HepG2 (cell line): ENCODE measurements at regions of chr11 and their contacts with region 1.

Region 1: GRCh38 chr11:121655537-121656327 is 203.0 kb upstream of the SORL1-AS1 start:
- DNase-seq: peak; percentile 69
- ATAC-seq: peak; percentile 93
- H3K4me3 ChIP-seq: peak overlapping the region; percentile 42 to 65 (median 56)
- H3K27ac ChIP-seq: peak overlapping the region; percentile 71
- H3K4me1 ChIP-seq: peaks cover 48% of the 10 kb centered on the region
- H3K27me3 ChIP-seq: peaks cover 0 to 6% of the 10 kb centered on the region in 2 experiments; a peak in 2 of 5 replicates
- CTCF ChIP-seq: peak; percentile 90
- EP300 ChIP-seq: no peak
- POLR2A ChIP-seq: no peak
- RAD21 ChIP-seq: peak; percentile 94

Region 2: GRCh38 chr11:122020902-122021301 is 365.2 kb after region 1 on chr11:
- CTCF ChIA-PET with region 1: no interaction called
- POLR2A ChIA-PET with region 1: no interaction called
- in situ Hi-C with region 1: loop called (anchors 10 kb)
- intact Hi-C with region 1: no loop called
- DNase-seq: no peak
- ATAC-seq: no peak
- H3K4me3 ChIP-seq: no peak overlapping the region
- H3K27ac ChIP-seq: no peak overlapping the region
- H3K4me1 ChIP-seq: no peaks in the 10 kb centered on the region
- H3K27me3 ChIP-seq: no peaks in the 10 kb centered on the region
- CTCF ChIP-seq: 0 out of 2 replicates have a peak, but pooled peaks have one; percentile 7
- EP300 ChIP-seq: no peak
- POLR2A ChIP-seq: no peak
- RAD21 ChIP-seq: no peak

Region 3: DNA sequence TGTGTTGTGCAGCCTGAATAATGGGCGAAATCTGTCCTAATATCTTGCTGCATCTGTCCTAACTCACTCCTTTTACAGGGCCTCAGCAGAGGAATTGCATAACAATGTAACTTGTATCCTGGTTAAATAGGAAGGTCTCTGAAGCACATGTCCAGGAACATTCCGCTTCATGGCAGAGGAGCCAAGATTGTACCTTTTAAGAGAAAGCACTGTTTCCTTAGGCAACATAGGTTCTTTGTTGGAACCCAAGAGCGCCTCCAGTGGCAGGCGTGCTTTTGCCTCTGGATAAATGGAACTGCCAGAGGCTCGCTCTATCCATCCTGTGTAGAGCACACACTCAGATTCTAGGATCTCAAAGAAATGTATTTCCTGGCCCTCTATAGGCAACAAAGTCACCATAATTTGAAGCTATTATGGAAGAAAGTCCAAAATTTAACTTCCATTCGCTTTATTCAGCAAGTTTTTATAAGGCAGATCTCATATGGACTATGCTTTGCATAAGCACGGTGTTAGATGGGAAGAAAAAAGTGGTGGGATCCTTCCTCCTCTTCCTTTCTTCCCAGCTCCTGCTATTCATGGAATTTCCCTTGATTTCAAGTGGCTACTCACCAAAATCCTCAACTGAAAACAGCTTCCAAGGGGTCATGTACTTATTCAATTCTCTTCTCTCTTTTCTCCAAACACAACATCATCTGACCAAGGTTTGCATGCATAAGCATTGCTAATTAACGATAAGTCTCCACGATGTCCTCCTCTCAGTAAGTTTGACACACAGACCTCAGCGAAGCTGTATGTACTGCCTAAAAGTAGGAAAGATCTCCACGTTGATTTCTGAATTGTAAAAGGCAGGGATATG is 460.0 kb after region 1 on chr11 and contains the start of gene BLID:
- CTCF ChIA-PET with region 1: interaction called, 3 read pairs
- POLR2A ChIA-PET with region 1: no interaction called
- in situ Hi-C with region 1: loop called (anchors 10 kb)
- intact Hi-C with region 1: no loop called
- DNase-seq: peak; percentile 7
- ATAC-seq: peak; percentile 85
- H3K4me3 ChIP-seq: no peak within 1 kb of the TSS
- H3K27ac ChIP-seq: no peak within 1 kb of the TSS
- H3K4me1 ChIP-seq: no peaks in the 10 kb centered on the region
- H3K27me3 ChIP-seq: no peaks in the 10 kb centered on the region
- CTCF ChIP-seq: peak; percentile 60
- EP300 ChIP-seq: no peak
- POLR2A ChIP-seq: no peak
- RAD21 ChIP-seq: no peak
- total RNA-seq, gene BLID: not detected in 2 replicates

Region 4: DNA sequence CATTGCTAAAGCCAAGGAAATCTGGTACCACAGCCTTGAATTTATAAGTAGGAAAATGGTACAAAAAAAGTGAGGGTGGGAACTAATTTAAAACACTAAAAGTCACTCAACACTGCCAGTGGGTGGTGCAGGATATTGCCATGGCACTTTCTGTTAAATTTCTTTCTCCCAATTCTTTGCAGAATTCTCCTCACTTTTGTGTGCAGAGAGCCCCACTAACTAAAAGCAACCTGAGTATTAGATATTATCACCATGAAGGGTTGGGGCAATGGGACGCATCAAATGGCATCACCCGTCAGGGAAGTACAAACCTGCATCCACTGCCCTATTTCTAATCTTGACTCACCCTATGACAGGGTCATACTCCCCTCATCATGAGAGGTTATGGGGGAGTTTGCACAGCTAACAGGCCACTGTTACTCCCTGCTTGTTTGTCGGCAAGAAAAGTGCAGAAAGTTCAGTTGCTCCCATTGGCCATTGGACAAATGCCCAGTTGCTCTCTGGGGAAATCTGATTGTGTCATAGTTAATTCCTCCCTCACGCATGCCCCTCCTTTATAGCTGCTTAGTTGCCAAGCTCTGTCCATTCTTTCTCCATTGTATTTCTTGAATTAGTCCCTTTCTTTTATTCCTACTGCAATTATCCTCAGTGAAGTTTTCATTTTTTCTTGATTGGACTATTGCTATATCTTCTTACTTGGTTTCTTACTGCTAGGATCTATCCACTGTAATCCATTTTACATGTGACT is 554.1 kb after region 1 on chr11:
- CTCF ChIA-PET with region 1: no interaction called
- POLR2A ChIA-PET with region 1: no interaction called
- in situ Hi-C with region 1: loop called (anchors 5 kb)
- intact Hi-C with region 1: no loop called
- DNase-seq: no peak
- ATAC-seq: no peak
- H3K4me3 ChIP-seq: no peak overlapping the region
- H3K27ac ChIP-seq: no peak overlapping the region
- H3K4me1 ChIP-seq: peaks cover 21% of the 10 kb centered on the region
- H3K27me3 ChIP-seq: peaks cover 1 to 8% of the 10 kb centered on the region in 2 experiments; a peak in 1 of 5 replicates
- CTCF ChIP-seq: no peak
- EP300 ChIP-seq: no peak
- POLR2A ChIP-seq: no peak
- RAD21 ChIP-seq: no peak

Region 5: DNA sequence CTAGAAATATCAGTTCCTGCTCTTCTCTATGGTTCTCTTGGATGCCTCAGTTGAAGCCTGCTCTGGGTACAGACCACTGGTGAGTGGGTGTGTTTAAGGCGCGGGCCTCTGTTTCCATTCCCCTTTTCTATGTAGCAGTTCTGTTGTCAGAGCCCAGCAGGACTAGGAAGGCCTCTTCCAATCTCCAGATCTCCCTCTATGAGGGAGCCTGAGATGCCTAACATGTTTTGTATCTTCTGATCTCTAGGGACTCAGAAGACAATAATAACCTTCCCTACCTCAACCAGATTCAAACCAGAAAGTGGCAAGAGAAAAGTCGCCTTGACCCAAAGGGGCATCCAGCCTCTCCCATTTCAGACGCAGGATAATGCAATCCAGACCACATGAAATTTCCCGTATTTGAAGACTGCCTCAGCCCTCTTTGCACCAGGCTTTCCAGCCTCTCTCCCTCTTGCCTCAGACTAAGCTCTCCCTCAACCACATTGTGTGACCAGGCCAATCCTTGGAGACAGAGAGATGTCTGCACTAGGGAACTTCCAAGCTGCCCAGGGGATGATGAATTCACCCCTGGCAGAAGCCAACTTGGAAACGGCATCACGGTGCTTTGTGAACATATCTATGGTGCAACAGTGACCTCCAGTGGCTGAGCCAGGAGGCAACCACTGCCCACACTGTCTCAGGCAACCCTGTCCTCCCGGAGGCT is 849.7 kb after region 1 on chr11:
- CTCF ChIA-PET with region 1: interaction called, 19 read pairs
- POLR2A ChIA-PET with region 1: interaction called, 3 read pairs
- in situ Hi-C with region 1: loop called (anchors 5 kb)
- intact Hi-C with region 1: loop called (anchors 1 kb)
- DNase-seq: peak; percentile 42
- ATAC-seq: peak; percentile 99
- H3K4me3 ChIP-seq: no peak overlapping the region
- H3K27ac ChIP-seq: no peak overlapping the region
- H3K4me1 ChIP-seq: peaks cover 6% of the 10 kb centered on the region; the same call in 1 of the 2 replicates
- H3K27me3 ChIP-seq: no peaks in the 10 kb centered on the region; a peak in 1 of 5 replicates
- CTCF ChIP-seq: peak; percentile 93
- EP300 ChIP-seq: no peak
- POLR2A ChIP-seq: no peak
- RAD21 ChIP-seq: peak; percentile 85